ENCODE measurements at regions of chr16 and their contacts with region 1.

Region 1: GRCh38 chr16:53054670-53055485 is at the start of gene CHD9:
- DNase-seq: peak; percentile 91
- H3K4me3 ChIP-seq: peak within 1 kb of the TSS; percentile 77
- H3K27ac ChIP-seq: peak within 1 kb of the TSS; percentile 92
- H3K4me1 ChIP-seq: peaks cover 46% of the 10 kb centered on the region
- CTCF ChIP-seq: peak; percentile 94
- total RNA-seq, gene CHD9: 52.6 and 56.5 TPM in 2 replicates

Region 2: DNA sequence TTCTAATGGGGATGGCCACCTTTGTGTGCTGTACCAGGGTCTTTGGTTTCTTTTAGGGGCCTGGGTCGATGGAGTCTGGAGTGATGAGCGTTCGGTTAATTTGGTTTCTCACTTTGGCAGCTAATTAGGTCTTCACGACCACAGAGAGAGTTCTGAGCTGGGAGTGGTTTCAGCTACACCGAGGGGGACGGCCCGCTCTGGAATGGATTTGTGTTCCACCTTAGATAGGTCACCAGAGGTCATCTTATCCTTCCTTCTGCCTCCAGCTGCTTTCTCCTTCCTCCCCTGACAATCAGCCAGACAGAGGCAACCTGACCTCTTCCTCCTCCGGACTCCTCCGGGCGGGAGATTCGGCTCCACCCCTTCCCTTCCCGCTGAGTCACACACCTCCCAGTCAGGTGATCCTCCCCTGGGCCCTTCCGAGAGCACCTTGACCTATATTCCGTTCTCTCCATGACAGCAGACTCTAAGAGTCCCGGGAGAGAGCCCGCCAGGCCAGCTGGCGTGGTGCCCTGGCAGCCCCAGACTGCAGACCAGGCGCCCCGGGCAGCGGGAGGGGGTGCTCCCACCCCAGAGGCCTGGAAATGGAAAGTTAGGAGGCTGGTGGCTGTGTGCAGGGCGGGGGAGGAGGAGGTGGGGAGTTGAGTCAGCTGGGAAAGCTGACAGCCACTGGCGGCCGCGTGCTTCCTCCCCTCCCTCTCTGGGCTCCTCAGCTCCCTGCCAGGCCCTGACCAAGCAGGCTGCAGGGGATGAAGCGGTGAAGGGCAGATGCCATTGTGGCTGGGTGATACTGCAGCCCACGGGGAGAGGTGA is 44.6 kb after region 1 on chr16:
- CTCF ChIA-PET with region 1: interaction called, 4 read pairs
- POLR2A ChIA-PET with region 1: interaction called, 77 read pairs
- intact Hi-C with region 1: no loop called
- DNase-seq: peak; percentile 70
- H3K4me3 ChIP-seq: peak overlapping the region; percentile 69
- H3K27ac ChIP-seq: peak overlapping the region; percentile 97
- H3K4me1 ChIP-seq: peaks cover 81% of the 10 kb centered on the region
- CTCF ChIP-seq: no peak

Region 3: GRCh38 chr16:53159781-53160436 is 105.0 kb after region 1 on chr16:
- CTCF ChIA-PET with region 1: interaction called, 3 read pairs
- POLR2A ChIA-PET with region 1: interaction called, 4 read pairs
- intact Hi-C with region 1: loop called (anchors 1 kb)
- DNase-seq: peak; percentile 75
- H3K4me3 ChIP-seq: no peak overlapping the region
- H3K27ac ChIP-seq: no peak overlapping the region
- H3K4me1 ChIP-seq: no peaks in the 10 kb centered on the region
- CTCF ChIP-seq: peak; percentile 91

Region 4: DNA sequence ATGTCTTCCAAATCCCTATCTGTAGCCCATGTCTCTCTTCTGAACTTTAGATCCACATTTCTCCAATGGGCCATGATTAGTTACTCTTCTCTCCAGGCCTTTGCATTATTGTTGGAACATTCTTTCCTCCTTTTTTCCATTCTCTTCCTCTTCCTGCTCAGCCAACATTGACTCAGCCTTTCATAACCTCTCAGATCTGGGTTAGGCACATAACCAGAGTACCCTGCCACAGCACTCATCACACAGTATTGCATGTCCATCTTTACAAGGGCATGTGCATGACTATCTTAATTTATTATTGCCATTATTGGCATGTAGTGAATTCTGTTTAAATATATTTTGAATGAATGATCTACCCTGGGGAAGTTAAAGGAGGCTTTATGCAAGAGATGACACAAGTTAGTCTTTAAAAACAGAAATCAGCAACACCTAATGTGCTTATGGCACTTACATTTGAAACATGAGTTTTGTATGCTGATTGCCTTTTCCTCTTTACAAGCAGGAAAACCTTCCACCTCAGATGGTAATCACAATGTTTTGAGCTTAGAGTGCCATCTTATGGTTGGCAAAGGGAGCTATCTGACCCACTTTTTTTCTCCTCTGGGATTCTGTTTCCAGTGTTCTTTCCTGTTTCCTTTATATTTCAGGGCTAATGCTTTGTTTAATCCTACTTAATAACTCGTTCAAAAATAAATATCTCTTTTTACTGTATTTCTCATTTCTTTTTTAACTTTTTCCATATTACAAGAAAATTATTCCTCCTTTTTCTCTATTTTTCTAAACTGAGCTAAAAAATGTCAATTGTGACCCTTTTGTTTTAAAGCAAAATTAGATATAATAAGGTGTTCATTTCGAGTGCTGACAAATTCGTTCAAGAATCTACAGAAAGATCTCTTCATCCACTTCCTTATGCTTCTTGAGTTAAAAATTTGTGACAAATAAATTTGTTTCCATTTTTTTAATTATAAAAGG is 228.4 kb after region 1 on chr16:
- CTCF ChIA-PET with region 1: no interaction called
- POLR2A ChIA-PET with region 1: interaction called, 5 read pairs
- intact Hi-C with region 1: loop called (anchors 1 kb)
- DNase-seq: peak; percentile 47
- H3K4me3 ChIP-seq: no peak overlapping the region
- H3K27ac ChIP-seq: no peak overlapping the region
- H3K4me1 ChIP-seq: no peaks in the 10 kb centered on the region
- CTCF ChIP-seq: peak; percentile 85

Measured in OCI-LY7 (cell line).